ENCODE measurements at regions of chr13 and their contacts with region 1.

Region 1: DNA sequence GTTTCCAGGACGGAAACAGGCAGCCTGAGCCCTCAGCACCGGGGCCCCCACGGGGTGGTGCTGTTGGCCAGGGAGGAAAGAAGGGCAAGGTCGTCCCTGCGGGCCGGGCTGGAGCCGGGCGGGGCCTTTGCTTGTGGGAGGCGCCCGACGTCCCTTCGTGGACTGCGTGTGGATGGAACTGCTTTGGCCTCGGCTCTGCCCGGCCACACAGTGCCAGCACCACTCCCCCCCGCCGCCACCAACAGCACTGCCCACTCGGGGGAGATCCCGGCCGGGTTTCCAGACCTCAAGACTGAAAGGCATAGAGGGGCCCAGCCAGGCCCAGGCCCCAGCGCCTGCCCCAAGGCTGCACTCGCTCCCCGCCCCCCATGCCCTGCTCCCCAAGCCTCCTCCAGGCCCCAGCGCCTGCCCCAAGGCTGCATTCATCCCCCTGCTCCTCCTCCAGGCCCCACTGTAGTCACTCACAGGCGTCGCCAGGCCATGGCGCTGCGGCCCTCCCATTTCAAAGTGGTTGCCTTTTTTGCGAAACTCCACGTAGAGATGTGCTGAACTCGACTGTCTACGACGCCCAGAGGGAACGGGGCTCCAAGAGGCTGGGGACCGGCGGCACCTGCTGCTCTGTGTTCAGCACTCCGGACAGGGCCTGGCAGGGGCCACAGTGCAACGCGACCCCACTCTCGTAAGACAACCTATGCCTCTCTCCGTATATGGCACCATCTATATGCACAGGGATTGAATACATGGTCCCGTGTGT is 22.5 kb downstream of the C13orf46 start:
- DNase-seq: peak; percentile 84 to 89
- ATAC-seq: peak; percentile 94

Region 2: DNA sequence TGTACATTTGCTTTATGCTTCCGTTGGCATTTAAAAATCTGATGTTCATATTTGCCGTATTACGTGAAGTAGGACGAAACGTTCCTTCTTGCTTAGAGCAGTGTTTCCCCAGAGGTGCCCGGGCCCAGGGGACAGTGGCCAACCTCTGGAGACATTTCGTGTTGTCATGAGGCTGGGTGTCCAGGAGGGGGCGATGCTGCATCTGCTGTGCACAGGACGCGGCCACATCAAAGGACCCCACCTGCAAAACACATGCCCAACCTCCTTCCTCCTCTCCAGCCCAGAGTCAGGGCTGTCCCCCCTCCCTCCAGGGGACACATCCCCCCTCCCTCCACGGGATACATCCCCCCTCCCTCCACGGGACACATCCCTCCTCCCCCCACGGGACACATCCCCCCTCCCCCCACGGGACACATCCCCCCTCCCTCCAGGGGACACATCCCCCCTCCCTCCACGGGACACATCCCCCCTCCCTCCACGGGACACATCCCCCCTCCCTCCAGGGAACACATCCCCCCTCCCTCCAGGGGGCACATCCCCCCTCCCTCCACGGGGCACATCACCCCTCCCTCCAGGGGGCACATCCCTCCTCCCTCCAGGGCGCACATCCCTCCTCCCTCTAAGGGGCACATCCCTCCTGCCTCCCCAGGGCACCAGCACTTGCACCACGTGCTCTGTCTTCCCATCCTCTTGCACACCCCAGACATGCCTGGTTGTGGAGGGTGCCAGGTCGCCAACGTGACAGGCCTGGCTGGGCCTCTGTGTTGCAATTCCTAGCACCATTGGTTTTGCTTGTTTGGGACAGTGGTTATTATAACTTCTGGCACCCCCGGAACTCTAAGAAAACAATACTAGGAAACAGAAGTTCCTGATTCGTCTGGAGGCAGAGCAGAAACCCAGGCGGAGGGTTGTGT is 134.2 kb before region 1 on chr13:
- intact Hi-C with region 1: loop called in 1 of 2 experiments (anchors 5 kb)
- DNase-seq: peak; percentile 92 to 97
- ATAC-seq: peak; percentile 73

Region 3: DNA sequence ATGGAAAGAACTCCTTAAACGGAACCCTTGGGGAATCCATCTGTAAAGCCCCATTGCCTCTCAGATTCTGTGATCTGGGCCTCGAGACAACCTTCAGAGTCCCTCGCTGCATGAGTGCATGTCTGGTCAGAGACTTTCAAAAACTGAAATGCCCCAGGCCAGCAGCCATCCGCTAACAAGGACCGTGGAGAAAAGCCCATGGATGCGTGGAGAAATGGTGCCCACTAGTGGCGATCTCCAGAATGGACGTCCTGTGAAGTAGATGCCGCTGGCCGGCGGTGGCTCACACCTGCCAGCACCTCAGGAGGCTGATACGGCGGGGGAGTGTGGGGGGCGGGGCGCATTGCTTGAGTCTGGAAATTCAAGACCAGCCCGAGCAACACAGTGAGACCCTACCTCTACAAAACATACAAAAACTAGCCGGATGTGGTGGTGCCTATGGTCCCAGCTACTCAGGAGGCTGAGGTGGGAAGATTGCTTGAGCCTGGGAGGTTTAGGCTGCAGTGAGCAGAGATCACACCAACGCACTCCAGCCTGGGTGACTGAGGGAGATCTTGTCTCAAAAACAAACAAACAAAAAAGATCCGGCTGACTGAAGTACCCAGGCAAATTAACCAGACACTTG is 275.4 kb after region 1 on chr13:
- intact Hi-C with region 1: loop called in 1 of 2 experiments (anchors 2 kb)
- DNase-seq: peak; percentile 72 to 92
- ATAC-seq: peak; percentile 96